CD8-positive, alpha-beta T cell (primary cell): ENCODE measurements at regions of chr3 and their contacts with region 1.

Region 1: GRCh38 chr3:35291837-35292236 is 347.5 kb upstream of the ARPP21 start:
- DNase-seq: no peak
- ATAC-seq: no peak
- H3K4me3 ChIP-seq: no peak overlapping the region
- H3K4me3 Mint-ChIP-seq: no peak overlapping the region
- H3K27ac ChIP-seq: no peak overlapping the region
- H3K27ac Mint-ChIP-seq: no peak overlapping the region
- H3K4me1 ChIP-seq: no peaks in the 10 kb centered on the region
- H3K4me1 Mint-ChIP-seq: peaks cover 8% of the 10 kb centered on the region
- H3K27me3 ChIP-seq: no peaks in the 10 kb centered on the region
- H3K27me3 Mint-ChIP-seq: no peaks in the 10 kb centered on the region
- CTCF ChIP-seq: no peak

Region 2: GRCh38 chr3:35871009-35871408 is 579.2 kb after region 1 on chr3:
- CTCF ChIA-PET with region 1: no interaction called
- POLR2A ChIA-PET with region 1: no interaction called
- intact Hi-C with region 1: loop called in 1 of 2 experiments (anchors 5 kb)
- DNase-seq: no peak
- ATAC-seq: no peak
- H3K4me3 ChIP-seq: no peak overlapping the region
- H3K4me3 Mint-ChIP-seq: no peak overlapping the region
- H3K27ac ChIP-seq: no peak overlapping the region
- H3K27ac Mint-ChIP-seq: no peak overlapping the region
- H3K4me1 ChIP-seq: no peaks in the 10 kb centered on the region
- H3K4me1 Mint-ChIP-seq: no peaks in the 10 kb centered on the region
- H3K27me3 ChIP-seq: no peaks in the 10 kb centered on the region
- H3K27me3 Mint-ChIP-seq: no peaks in the 10 kb centered on the region
- CTCF ChIP-seq: no peak